Activated B cell treated with CpG ODN at 0.5 μM for 24 hours (primary cell): ENCODE measurements at regions of chr2 and their contacts with region 1.

Region 1: DNA sequence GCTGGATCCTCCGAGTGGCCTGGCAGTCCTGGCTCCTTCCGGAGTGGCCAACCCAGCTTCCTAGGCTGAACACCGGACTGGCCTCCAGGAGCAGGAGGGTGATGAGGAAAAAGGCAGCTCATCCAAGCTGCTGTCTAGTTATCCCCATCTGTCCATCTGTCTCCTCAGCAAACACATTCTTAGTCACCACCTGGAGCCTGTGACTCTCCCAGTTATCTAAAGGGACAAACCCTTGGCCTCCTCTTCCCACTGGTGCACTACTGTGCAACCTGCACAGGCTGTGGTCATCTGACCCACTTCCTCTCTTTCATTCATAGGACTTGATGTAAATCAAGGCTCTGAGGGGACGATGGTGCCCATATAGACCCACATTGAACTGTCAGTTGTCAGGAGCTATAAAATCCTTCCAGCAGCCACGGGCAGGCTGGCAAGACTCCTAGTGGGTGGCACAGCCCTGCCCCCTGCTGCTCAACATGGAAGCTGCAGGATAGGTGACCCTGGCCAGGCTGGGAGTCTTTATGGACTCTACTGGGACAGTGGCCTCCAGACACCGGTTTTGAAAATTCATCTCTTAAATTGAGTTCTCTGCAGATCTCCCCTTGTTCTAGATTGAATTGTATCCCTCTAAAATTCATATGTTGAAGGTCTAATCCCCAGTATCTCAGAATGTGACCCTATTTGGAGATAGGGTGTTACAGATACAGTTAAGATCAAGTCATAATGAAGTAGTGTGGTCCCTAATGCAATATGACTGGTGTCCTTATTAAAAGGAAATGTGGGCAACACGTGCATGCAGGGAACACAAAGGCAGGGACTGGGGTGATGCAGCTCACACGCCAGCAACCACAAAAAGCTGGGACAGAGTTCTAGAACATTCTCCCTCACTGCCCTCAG is 29.3 kb upstream of the DUSP2 start:
- DNase-seq: peak; percentile 76
- ATAC-seq: peak; percentile 99
- H3K4me3 Mint-ChIP-seq: no peak overlapping the region
- H3K27ac Mint-ChIP-seq: no peak overlapping the region
- H3K4me1 Mint-ChIP-seq: peaks cover 20% of the 10 kb centered on the region
- H3K27me3 Mint-ChIP-seq: no peaks in the 10 kb centered on the region
- CTCF ChIP-seq: peak; percentile 75

Region 2: GRCh38 chr2:96083989-96084857 is 90.3 kb before region 1 on chr2:
- CTCF ChIA-PET with region 1: no interaction called
- POLR2A ChIA-PET with region 1: no interaction called
- intact Hi-C with region 1: no loop called
- DNase-seq: no peak
- ATAC-seq: no peak
- H3K4me3 Mint-ChIP-seq: no peak overlapping the region
- H3K27ac Mint-ChIP-seq: no peak overlapping the region
- H3K4me1 Mint-ChIP-seq: no peaks in the 10 kb centered on the region
- H3K27me3 Mint-ChIP-seq: peaks cover 20% of the 10 kb centered on the region
- CTCF ChIP-seq: no peak

Region 3: DNA sequence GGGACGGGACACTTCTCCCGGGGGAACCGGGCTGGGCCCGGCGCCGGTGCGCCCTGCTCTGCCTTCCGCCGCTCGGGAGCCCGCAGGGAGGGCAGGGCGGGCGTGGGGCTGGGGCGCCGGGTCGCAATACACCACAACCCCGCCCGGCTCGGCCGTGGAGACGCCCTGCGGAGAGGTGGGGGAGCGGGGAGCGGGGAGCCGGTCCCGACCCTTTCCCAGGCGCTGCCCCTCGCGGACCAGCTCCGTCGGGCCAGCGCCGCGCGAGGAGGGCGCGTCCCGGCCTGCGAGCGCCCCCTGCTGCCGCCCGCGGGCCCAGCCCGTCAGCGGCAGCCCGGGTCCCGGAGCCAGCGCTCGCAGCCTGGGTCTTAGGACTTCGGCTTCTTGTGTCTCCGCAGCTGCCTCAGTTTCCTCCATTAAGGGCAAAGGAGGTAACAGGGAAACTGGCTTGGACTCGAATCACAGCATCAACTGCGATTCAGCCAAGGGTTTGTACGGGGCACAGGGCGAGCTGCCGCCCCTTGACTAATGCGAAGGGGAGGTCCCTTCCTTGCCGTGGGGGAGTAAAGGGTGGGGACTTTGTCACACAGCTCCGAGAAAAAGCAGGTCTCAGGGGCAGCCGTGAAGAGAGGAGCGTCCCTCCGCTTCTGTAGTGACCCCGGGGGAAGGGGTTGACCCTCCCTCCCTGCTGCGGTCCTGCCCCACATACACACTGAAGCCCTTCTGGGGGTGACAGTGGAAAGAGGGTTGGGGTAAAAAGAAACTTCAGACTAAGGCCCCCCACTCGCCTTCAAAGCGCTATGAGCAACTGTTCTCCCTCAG is 57.4 kb before region 1 on chr2:
- CTCF ChIA-PET with region 1: interaction called, 35 read pairs
- POLR2A ChIA-PET with region 1: interaction called, 7 read pairs
- intact Hi-C with region 1: loop called (anchors 1 kb)
- DNase-seq: peak; percentile 82
- ATAC-seq: peak; percentile 79
- H3K4me3 Mint-ChIP-seq: peak overlapping the region; percentile 71
- H3K27ac Mint-ChIP-seq: peak overlapping the region; percentile 41
- H3K4me1 Mint-ChIP-seq: peaks cover 25% of the 10 kb centered on the region
- H3K27me3 Mint-ChIP-seq: peaks cover 22% of the 10 kb centered on the region
- CTCF ChIP-seq: peak; percentile 56

Region 4: GRCh38 chr2:96138179-96139145 is 36.0 kb before region 1 on chr2 and contains the start of gene ASTL:
- CTCF ChIA-PET with region 1: interaction called, 511 read pairs
- POLR2A ChIA-PET with region 1: interaction called, 534 read pairs
- intact Hi-C with region 1: loop called (anchors 1 kb)
- DNase-seq: peak; percentile 53
- ATAC-seq: peak; percentile 73
- H3K4me3 Mint-ChIP-seq: peak within 1 kb of the TSS; percentile 38
- H3K27ac Mint-ChIP-seq: peak within 1 kb of the TSS; percentile 35
- H3K4me1 Mint-ChIP-seq: peaks cover 37% of the 10 kb centered on the region
- H3K27me3 Mint-ChIP-seq: no peaks in the 10 kb centered on the region
- CTCF ChIP-seq: no peak
- total RNA-seq, gene ASTL: 1.0 and 1.6 TPM in 2 replicates

Region 5: GRCh38 chr2:96157651-96158553 is 16.6 kb before region 1 on chr2:
- CTCF ChIA-PET with region 1: interaction called, 40 read pairs
- POLR2A ChIA-PET with region 1: interaction called, 17 read pairs
- intact Hi-C with region 1: loop called (anchors 1 kb)
- DNase-seq: peak; percentile 62
- ATAC-seq: peak; percentile 61
- H3K4me3 Mint-ChIP-seq: peak overlapping the region; percentile 69
- H3K27ac Mint-ChIP-seq: peak overlapping the region; percentile 85
- H3K4me1 Mint-ChIP-seq: peaks cover 70% of the 10 kb centered on the region
- H3K27me3 Mint-ChIP-seq: no peaks in the 10 kb centered on the region
- CTCF ChIP-seq: no peak

Region 6: DNA sequence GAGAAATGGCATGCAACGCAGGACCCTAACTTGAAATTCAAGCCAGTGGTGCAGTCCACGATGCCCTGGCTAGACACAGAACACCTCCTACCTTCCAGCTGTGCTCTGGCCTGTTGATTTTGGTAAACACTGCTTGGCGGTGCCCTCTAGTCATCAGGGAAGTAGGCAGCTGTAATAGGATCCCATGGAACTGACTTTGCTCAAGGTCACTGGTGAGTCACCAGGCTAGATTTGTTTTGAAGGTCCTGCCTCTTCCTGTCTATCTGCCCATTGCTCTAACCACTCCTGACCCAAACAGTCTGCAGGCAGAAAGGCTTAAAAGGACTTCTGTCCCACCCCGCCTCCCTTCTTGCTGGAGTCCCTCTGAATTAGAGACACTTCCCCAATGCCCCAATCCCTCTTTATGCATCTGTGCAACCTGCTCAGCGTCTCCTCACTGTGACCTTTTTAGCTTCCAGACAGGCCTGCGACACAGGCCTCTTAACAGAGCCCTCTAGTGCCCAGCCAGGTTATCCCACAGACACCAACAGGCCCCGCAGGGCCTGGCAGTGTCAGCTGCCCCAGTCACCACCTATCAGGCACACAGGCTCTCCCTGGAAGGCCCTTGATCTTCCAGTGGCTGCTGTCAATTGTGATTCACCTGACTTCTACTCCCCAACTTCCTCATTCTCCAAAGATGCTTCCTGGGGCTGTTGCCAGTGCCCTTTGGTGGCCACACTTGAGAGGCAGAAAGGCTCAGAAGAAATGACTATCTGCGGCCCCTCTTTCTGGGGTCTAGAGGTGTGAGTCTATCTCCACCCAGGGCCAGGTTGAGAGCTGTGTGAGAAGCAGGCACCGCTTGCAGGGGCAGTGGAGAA is 86.1 kb after region 1 on chr2:
- CTCF ChIA-PET with region 1: interaction called, 12 read pairs
- POLR2A ChIA-PET with region 1: interaction called, 5 read pairs
- intact Hi-C with region 1: no loop called
- DNase-seq: no peak
- ATAC-seq: peak; percentile 56
- H3K4me3 Mint-ChIP-seq: peak overlapping the region; percentile 36
- H3K27ac Mint-ChIP-seq: peak overlapping the region; percentile 80
- H3K4me1 Mint-ChIP-seq: peaks cover 89% of the 10 kb centered on the region
- H3K27me3 Mint-ChIP-seq: no peaks in the 10 kb centered on the region
- CTCF ChIP-seq: no peak

Region 7: DNA sequence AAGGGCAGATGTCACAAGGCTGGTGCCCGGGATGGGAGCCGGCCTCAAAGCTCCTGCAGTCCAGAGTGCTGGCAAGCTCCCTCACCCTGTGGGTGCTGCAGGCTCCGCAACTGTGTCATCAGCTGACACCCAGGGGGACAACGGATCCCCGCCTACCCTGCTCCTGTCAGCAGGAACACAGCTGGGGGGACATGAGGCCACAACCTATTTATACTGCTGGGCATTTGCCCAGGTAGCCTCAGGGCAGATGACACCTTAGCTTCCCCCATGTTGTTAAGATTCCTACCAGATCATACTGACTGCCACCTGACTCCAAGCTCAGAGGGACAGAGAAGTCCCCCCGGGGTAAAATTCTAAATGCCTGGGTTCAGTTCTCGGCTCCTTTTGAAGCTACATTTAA is 668.1 kb after region 1 on chr2:
- CTCF ChIA-PET with region 1: no interaction called
- POLR2A ChIA-PET with region 1: no interaction called
- intact Hi-C with region 1: no loop called
- DNase-seq: no peak
- ATAC-seq: no peak
- H3K4me3 Mint-ChIP-seq: no peak overlapping the region
- H3K27ac Mint-ChIP-seq: no peak overlapping the region
- H3K4me1 Mint-ChIP-seq: peaks cover 16% of the 10 kb centered on the region
- H3K27me3 Mint-ChIP-seq: no peaks in the 10 kb centered on the region
- CTCF ChIP-seq: no peak

Region 8: DNA sequence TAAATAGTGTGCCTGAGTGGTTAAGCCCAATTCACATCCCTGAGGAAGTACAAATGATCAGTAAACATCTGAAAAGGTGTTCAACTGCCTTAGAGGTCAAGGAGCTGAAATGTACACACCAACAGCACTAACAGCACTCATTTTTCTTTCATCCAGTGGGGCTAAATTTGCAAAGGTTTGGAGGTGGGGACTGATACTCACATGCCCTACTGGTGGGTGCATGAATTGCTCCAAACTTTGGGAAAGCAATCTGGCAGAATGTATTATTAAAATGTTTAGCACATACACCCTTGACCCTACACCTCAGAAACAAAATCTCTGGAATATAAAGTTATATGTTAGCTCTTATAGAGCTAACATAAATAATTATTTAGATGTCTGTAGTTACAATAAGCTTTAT is 830.9 kb after region 1 on chr2:
- CTCF ChIA-PET with region 1: no interaction called
- POLR2A ChIA-PET with region 1: no interaction called
- intact Hi-C with region 1: no loop called
- DNase-seq: no peak
- ATAC-seq: no peak
- H3K4me3 Mint-ChIP-seq: no peak overlapping the region
- H3K27ac Mint-ChIP-seq: no peak overlapping the region
- H3K4me1 Mint-ChIP-seq: no peaks in the 10 kb centered on the region
- H3K27me3 Mint-ChIP-seq: peaks cover 7% of the 10 kb centered on the region
- CTCF ChIP-seq: no peak